HEK293T (cell line): ENCODE measurements at regions of chr2 and their contacts with region 1.

Region 1: GRCh38 chr2:64330281-64331113 is 123.5 kb upstream of the LGALSL start:
- DNase-seq: peak; percentile 64

Region 2: DNA sequence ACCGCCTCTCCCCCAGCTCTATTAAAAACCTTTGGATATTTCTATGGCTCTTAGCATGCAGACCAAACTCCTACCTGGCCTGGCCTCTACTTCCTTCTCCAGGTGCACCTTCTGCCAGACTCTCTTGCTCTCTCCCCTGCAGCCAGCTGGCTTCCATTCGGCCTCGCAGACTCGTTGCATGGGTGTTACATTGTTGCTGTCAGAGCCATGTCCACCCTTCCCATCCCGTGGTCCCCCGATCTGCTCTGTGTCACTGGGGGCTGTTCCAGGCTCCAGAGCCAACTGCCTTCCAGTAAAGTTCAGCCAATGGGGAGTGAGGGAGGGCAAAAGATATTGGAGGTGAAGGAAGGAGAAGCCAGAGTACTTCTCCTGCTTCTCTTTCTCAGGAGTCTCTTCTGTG is 11.0 kb after region 1 on chr2:
- CTCF ChIA-PET with region 1: interaction called, 12 read pairs
- POLR2A ChIA-PET with region 1: no interaction called
- DNase-seq: no peak

Region 3: GRCh38 chr2:64488050-64488974 is 157.8 kb after region 1 on chr2:
- CTCF ChIA-PET with region 1: interaction called, 36 read pairs
- POLR2A ChIA-PET with region 1: interaction called, 3 read pairs
- DNase-seq: peak; percentile 75